Activated CD4-positive, alpha-beta memory T cell treated with anti-CD3 and anti-CD28 coated beads for 36 hours (primary cell): ENCODE measurements at regions of chr7 and their contacts with region 1.

Region 1: DNA sequence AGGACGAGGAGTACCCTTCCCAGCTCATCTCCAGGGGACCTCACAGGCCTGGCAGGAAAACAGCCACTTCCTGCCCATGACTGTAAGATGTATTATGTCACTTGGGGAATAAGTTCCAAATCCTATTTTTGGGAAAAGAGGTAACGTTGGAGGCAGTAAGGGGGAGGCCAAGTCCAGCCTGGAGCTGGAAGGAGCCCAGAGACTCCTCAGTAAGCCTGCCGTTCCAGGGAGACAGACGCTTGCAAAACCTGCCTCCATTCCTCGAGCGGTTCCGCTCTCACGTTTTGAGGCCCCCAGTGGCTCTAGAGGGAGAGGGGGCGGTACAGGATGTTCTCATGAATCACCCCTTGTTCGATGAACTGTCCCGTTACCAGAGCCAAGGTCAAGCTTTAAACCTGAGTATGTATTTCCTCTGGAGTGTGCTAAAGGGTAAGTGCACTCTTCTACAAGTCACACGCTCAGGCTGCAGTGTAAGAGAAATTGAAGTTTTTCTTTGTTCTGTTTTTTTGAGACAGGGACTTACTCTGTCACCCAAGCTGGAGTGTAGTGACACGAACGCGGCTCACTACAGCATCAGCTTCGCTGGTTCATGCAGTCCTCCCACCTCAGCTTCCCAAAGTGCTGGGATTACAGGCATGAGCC is 45.5 kb upstream of the CYTH3 start:
- DNase-seq: no peak
- H3K4me3 Mint-ChIP-seq: no peak overlapping the region
- H3K27ac Mint-ChIP-seq: no peak overlapping the region
- H3K4me1 Mint-ChIP-seq: no peaks in the 10 kb centered on the region
- H3K27me3 Mint-ChIP-seq: no peaks in the 10 kb centered on the region

Region 2: DNA sequence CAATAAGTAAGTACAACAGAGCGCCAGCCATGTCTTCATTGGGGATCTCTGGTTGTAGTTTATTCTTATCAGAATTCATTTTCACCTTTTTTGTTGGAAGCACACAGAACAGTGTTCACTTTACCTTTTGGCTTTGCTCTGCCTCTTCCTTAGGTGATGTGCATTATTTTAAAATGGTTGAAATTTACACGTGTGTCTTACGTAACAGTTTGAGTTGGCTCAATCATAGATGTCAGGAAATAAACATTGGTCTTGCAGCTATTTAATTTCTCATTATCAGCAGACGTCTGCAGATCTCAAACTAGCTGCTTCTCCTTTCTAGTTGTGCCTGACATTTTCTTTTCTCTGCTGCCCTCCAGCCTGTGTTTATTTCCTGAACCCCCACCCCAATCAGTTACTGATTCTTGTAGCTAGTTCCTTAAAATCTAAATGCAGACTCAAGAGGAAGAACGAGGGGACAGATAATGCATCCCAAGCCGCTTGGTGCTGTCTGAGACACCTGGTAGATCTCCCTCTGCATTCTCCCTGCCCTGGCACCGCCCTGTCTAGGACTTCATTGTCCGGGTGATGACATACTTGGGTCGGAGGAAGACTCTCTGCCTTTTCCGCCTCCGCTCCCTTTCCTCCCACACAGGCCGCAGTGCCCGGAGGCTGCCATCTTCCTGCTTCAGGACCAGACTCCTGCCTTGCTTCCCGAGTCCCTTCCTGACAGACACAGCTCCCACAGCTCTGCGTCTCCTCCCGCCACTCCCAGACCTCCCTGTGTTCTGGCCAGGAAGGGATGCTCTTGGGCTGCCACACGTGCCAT is 178.5 kb before region 1 on chr7:
- CTCF ChIA-PET with region 1: interaction called, 11 read pairs
- POLR2A ChIA-PET with region 1: no interaction called
- intact Hi-C with region 1: no loop called
- DNase-seq: no peak
- H3K4me3 Mint-ChIP-seq: no peak overlapping the region
- H3K27ac Mint-ChIP-seq: no peak overlapping the region
- H3K4me1 Mint-ChIP-seq: no peaks in the 10 kb centered on the region
- H3K27me3 Mint-ChIP-seq: no peaks in the 10 kb centered on the region

Region 3: DNA sequence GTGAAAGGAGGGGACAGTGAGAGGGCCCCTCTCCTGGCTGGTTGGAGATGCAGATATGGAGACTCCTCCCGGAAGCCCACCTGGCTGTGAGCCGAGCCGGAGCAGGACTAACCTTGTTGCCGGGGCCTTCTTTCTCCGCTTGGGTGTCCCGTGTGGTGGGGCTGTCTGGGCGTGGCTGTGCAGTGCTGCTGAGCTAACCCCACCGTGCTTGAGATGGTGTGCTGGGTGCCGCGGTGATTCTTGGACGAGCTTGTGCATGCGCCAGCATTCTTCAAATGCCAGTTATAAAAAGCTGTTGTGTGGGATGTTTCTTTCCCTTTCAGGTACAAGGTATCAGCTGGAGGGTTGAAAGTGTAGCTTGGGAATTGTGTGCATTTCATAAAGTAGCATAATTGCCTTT is 81.0 kb after region 1 on chr7:
- CTCF ChIA-PET with region 1: no interaction called
- POLR2A ChIA-PET with region 1: no interaction called
- intact Hi-C with region 1: no loop called
- DNase-seq: no peak
- H3K4me3 Mint-ChIP-seq: no peak overlapping the region
- H3K27ac Mint-ChIP-seq: peak overlapping the region; percentile 13
- H3K4me1 Mint-ChIP-seq: peaks cover 23% of the 10 kb centered on the region
- H3K27me3 Mint-ChIP-seq: no peaks in the 10 kb centered on the region